ENCODE measurements at regions of chr15 and their contacts with region 1.

Region 1: GRCh38 chr15:44910981-44911625 is 45.4 kb upstream of the TERB2 start:
- DNase-seq: no peak
- ATAC-seq: peak; percentile 87
- H3K4me3 Mint-ChIP-seq: no peak overlapping the region
- H3K27ac Mint-ChIP-seq: no peak overlapping the region
- H3K4me1 Mint-ChIP-seq: peaks cover 6% of the 10 kb centered on the region
- H3K27me3 Mint-ChIP-seq: no peaks in the 10 kb centered on the region

Region 2: DNA sequence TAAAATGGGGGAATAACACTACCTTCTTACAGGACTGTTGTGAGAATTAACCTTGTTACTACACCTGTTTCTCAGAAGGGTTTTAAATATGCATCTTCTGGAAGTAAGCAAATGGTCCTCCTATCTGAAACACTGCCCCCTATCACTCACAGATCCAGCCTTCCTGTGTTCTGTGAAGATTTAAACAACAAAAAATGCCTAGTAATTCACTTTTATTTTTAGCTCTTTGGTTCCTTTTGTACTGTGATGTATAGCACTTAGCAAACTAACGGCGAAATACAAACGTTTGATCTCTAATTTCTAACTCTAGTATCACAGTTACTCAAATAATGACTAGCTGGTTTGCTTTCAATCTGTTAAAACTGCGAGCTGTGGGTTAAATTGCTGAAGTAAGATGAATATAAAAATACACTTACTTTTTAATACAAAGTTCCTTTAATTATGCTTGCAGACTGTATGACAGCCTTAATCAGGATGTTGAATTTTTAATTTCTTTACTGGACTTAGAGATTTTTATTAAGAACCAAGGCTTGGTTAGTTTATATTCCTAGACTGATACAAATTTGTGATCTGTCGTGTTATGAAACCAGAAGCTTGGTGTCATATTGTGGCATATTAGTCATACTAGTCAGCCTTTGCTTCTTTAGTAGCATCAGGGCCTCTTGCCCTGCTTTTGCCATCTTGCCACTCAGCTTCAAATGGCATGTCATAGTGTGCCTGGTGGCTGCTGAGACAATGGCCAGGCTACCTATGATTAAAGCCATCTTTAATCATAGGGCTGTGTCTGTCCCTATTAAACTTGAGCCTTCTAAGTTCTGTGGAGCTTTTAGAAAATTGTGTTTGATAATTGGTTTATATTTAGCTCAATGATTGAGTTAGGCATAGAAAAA is 364.9 kb before region 1 on chr15:
- CTCF ChIA-PET with region 1: no interaction called
- POLR2A ChIA-PET with region 1: no interaction called
- intact Hi-C with region 1: no loop called
- DNase-seq: peak; percentile 72
- ATAC-seq: peak; percentile 94
- H3K4me3 Mint-ChIP-seq: peak overlapping the region; percentile 51
- H3K27ac Mint-ChIP-seq: peak overlapping the region; percentile 85
- H3K4me1 Mint-ChIP-seq: peaks cover 58% of the 10 kb centered on the region
- H3K27me3 Mint-ChIP-seq: no peaks in the 10 kb centered on the region

Region 3: GRCh38 chr15:44882499-44882968 is 28.6 kb before region 1 on chr15:
- CTCF ChIA-PET with region 1: interaction called, 3 read pairs
- POLR2A ChIA-PET with region 1: no interaction called
- intact Hi-C with region 1: loop called in 1 of 2 experiments (anchors 1 kb)
- DNase-seq: peak; percentile 74
- ATAC-seq: peak; percentile 94
- H3K4me3 Mint-ChIP-seq: peak overlapping the region; percentile 29
- H3K27ac Mint-ChIP-seq: peak overlapping the region; percentile 35
- H3K4me1 Mint-ChIP-seq: peaks cover 32% of the 10 kb centered on the region
- H3K27me3 Mint-ChIP-seq: peaks cover 8% of the 10 kb centered on the region